ACHN (cell line): ENCODE measurements at regions of chr3 and their contacts with region 1.

Region 1: GRCh38 chr3:180601688-180602666 is at the start of gene TTC14:
- DNase-seq: peak; percentile 90

Region 2: GRCh38 chr3:179750720-179751328 is 851.2 kb before region 1 on chr3:
- in situ Hi-C with region 1: loop called (anchors 25 kb)
- DNase-seq: peak; percentile 47

Region 3: DNA sequence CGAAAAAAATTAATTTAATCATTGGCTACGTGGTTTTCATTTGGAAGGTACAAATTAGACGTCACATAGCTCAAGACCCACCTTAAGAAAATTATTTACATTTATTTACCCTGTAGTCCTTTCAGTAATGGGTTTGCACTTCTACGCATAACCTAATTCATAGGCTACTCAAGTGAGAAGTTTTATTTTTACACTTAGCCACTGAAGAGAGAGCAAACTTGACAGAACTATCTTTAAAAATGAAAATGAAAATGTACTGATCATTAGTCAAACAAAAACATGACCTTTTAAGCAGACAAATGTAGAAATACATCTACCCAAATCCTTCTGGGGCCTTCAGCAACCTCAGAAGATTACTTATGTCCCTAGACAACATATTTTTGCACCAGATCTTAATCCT is 269.4 kb before region 1 on chr3:
- in situ Hi-C with region 1: no loop called
- DNase-seq: no peak

Region 4: GRCh38 chr3:180402471-180403073 is 199.4 kb before region 1 on chr3:
- in situ Hi-C with region 1: no loop called
- DNase-seq: no peak

Region 5: DNA sequence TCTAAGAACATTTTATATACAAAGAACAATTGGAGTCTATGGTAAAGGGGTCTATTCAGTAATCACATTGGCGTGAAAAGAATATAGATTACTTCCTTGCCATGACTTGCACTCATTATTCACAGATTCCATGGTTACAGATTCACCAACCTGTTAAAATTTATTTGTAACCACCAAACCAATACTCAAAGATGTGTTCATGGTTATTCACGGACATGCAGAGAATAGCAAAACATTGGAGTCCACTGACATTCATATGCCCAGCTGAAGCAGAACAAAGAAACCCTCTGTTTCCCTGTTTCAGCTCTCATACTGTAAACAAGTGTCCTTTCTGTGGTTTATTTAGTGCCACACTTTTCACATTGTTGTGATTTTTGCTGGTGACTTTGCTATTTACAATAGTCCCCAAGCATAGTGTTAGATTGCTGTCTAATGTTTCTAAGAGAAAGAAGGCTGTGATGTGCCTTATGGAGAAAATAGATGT is 185.8 kb before region 1 on chr3:
- in situ Hi-C with region 1: no loop called
- DNase-seq: no peak